Posterior cingulate gyrus (tissue), 11 donors: ENCODE measurements at regions of chr7 and their contacts with region 1.

Region 1: DNA sequence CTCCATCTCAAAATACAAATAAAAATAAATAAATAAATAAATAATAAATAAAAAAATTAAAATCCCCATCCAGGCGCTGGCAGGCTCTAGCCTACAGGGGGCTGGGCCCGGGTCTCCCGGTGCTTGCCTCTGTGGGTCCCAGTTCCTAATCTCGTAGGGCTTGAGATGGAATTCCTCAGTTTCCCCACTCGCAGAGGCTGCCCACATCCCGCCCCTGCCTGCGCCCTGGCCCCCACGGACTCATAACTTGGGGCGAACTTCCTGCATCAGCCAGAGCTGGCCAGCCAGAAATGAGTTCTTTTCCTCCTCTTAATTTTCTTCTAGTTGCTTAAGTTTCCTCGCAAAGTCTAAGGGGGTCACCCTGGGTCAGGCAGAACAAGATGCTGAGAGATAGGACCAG is 22.0 kb upstream of the SRRM3 start:
- DNase-seq: peak in 1 of 10 donors; percentile 20

Region 2: GRCh38 chr7:76262683-76263402 is 83.2 kb after region 1 on chr7:
- intact Hi-C with region 1: loop called (anchors 1 kb)
- DNase-seq: peak in 7 of 10 donors; percentile 54 to 94 (median 71)

Region 3: GRCh38 chr7:76409537-76409936 is 229.9 kb after region 1 on chr7 and contains the start of gene SSC4D:
- intact Hi-C with region 1: no loop called
- DNase-seq: no peak